ENCODE measurements at regions of chr7 and their contacts with region 1.

Region 1: DNA sequence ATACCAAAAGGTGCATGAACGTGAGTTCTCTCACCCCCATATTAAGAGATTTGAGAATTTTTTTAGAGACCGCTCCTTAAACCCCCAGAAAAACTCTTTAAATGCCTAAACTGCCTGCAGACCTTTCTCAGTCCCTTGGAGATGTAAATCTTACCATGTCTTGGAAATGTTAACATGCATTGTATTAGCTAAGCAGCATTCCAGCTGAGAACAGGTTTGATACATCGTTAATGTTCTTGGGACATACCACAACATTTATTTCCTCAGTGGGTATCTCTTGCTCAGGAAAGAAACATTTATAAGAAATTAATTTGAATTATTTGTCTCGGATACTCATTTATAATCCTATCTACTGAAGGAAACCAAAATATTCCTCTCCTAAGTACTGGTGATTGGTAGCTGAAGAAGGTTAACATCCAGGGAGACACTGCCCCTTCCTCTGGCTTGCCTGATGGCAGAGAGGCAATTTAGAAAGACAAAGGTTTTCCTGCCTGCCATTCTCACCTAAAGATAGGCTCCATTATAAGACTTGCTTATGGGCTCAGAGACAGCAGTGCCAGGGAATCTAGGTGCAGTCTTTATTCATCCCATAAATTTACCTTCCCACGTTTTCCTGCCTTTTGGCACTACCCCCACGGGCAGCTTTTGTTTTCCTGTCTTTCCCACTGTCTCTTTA is 141.2 kb downstream of the COBL start:
- DNase-seq: no peak
- ATAC-seq: no peak
- H3K4me3 ChIP-seq: no peak overlapping the region
- H3K4me3 Mint-ChIP-seq: no peak overlapping the region
- H3K27ac ChIP-seq: no peak overlapping the region
- H3K27ac Mint-ChIP-seq: no peak overlapping the region
- H3K4me1 ChIP-seq: no peaks in the 10 kb centered on the region
- H3K4me1 Mint-ChIP-seq: no peaks in the 10 kb centered on the region
- H3K27me3 ChIP-seq: peaks cover 2 to 5% of the 10 kb centered on the region in 2 experiments
- H3K27me3 Mint-ChIP-seq: peaks cover 8 to 13% of the 10 kb centered on the region in 2 donors

Region 2: GRCh38 chr7:51162724-51163329 is 12.6 kb before region 1 on chr7:
- CTCF ChIA-PET with region 1: interaction called, 3 to 15 read pairs
- POLR2A ChIA-PET with region 1: no interaction called
- DNase-seq: peak in 34 of 35 experiments; percentile 22 to 68 (median 44)
- ATAC-seq: peak; percentile 67 to 76 (median 72)
- H3K4me3 ChIP-seq: no peak overlapping the region
- H3K4me3 Mint-ChIP-seq: no peak overlapping the region
- H3K27ac ChIP-seq: no peak overlapping the region
- H3K27ac Mint-ChIP-seq: no peak overlapping the region
- H3K4me1 ChIP-seq: peaks cover 0 to 2% of the 10 kb centered on the region in 2 experiments
- H3K4me1 Mint-ChIP-seq: peaks cover 4 to 7% (median 6%) of the 10 kb centered on the region in 3 donors
- H3K27me3 ChIP-seq: no peaks in the 10 kb centered on the region
- H3K27me3 Mint-ChIP-seq: peaks cover 14 to 22% of the 10 kb centered on the region in 2 donors